ENCODE measurements at regions of chr1 and their contacts with region 1.

Region 1: GRCh38 chr1:151539990-151540981 is at the start of gene TUFT1:
- DNase-seq: peak; percentile 81 to 96
- H3K4me3 ChIP-seq: peak within 1 kb of the TSS; percentile 65 to 95 (median 82)
- H3K27ac ChIP-seq: peak within 1 kb of the TSS; percentile 78
- H3K4me1 ChIP-seq: peaks cover 0 to 7% (median 6%) of the 10 kb centered on the region in 4 experiments; a peak in 6 of 7 replicates
- H3K27me3 ChIP-seq: no peaks in the 10 kb centered on the region
- CTCF ChIP-seq: no peak
- EP300 ChIP-seq: no peak
- POLR2A ChIP-seq: peak; percentile 92 to 98
- RAD21 ChIP-seq: no peak
- total RNA-seq, gene TUFT1: 10.1 and 10.4 TPM in 2 replicates

Region 2: GRCh38 chr1:151472856-151473731 is 67.2 kb before region 1 on chr1:
- CTCF ChIA-PET with region 1: interaction called, 4 read pairs
- POLR2A ChIA-PET with region 1: interaction called, 13 read pairs
- DNase-seq: peak in 1 of 2 experiments; percentile 73
- H3K4me3 ChIP-seq: peak overlapping the region; percentile 42 to 66 (median 50)
- H3K27ac ChIP-seq: no peak overlapping the region; the same call in 1 of the 2 replicates
- H3K4me1 ChIP-seq: no peaks in the 10 kb centered on the region; a peak in 2 of 7 replicates
- H3K27me3 ChIP-seq: no peaks in the 10 kb centered on the region
- CTCF ChIP-seq: no peak
- EP300 ChIP-seq: no peak
- POLR2A ChIP-seq: peak; percentile 40 to 49
- RAD21 ChIP-seq: no peak

Region 3: DNA sequence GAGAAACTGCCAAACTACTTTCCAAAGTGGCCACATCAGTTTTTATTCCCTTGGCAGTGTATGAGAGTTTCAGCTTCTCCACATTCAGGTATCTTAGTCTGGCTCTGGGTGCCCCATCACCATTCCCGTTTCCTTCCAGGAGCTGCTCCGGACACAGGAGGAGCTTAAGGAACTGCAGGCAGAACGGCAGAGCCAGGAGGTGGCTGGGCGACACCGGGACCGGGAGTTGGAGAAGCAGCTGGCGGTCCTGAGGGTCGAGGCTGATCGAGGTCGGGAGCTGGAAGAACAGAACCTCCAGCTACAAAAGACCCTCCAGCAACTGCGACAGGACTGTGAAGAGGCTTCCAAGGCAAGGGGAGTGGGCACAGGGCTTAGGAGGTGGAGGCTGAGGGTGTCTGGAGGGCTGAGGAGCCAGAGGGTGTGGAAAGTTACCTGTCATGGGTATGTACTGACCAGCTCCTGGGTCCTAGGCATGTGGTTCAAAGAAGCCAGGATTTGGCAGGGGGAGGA is 11.0 kb before region 1 on chr1:
- CTCF ChIA-PET with region 1: interaction called, 5 read pairs
- POLR2A ChIA-PET with region 1: interaction called, 283 read pairs
- DNase-seq: no peak
- H3K4me3 ChIP-seq: no peak overlapping the region
- H3K27ac ChIP-seq: no peak overlapping the region
- H3K4me1 ChIP-seq: no peaks in the 10 kb centered on the region
- H3K27me3 ChIP-seq: no peaks in the 10 kb centered on the region
- CTCF ChIP-seq: no peak
- EP300 ChIP-seq: no peak
- POLR2A ChIP-seq: no peak
- RAD21 ChIP-seq: no peak

Region 4: DNA sequence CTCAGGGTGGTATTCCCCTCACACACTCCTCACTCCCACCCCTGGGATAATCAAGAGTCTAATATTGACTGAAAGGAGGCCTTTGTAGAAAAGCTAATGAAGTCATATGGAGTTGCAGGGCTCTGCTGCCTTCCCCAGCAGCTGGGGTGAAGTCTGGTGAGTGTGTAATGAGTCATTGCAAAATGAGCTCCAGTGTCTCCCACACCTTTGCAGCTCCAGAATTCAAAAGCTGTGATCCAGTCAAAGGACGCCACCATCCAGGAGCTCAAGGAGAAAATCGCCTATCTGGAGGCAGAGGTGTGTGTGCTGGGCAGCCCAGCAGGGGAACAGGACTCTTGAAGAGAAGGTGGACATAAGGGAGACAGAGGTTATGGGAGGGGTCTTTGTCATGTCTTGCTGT is 39.1 kb after region 1 on chr1:
- CTCF ChIA-PET with region 1: no interaction called
- POLR2A ChIA-PET with region 1: interaction called, 21 read pairs
- DNase-seq: no peak
- H3K4me3 ChIP-seq: no peak overlapping the region
- H3K27ac ChIP-seq: no peak overlapping the region
- H3K4me1 ChIP-seq: peaks cover 0 to 5% (median under 1%) of the 10 kb centered on the region in 4 experiments; a peak in 2 of 7 replicates
- H3K27me3 ChIP-seq: no peaks in the 10 kb centered on the region
- CTCF ChIP-seq: no peak
- EP300 ChIP-seq: no peak
- POLR2A ChIP-seq: no peak
- RAD21 ChIP-seq: no peak

Region 5: DNA sequence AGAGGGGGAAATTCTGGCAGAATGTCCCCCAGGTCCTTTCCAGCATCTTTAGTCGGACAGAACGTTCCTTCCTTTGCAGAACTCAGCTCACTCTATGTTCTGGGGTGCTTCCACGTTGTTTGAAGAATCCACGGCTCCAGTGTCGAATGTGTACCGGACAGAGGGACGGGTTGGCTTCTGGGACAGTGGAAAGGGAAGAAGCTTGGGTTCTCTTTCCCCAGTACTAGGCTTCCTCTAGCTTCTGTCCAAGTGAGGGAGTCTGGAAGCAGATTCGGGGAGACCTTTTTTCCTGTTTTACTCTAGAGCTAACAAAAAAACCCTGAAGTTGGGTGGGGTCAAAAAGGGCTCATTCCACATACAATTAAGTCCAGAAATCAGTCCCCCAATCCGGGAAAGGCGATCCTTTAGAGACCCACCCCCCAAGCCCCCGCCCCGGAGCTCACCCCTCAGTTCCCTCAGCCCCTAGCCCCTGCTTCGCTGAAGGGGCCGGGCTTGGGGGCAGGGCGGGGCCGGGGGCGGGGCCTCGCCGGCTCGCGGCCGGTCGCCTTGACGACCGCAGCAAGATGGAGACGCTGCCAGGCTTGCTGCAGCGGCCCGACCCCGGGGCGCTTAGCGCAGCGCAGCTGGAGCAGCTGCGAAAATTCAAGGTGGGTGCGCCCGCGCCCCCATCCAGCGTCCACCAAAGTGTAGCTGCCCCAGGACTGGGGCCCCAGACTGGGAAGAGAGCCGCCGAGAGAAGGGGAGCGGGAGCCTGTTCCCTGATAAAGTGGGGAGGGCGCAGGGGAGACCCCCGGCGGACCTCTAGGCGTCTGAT is 180.9 kb after region 1 on chr1 and contains the start of gene RIIAD1:
- CTCF ChIA-PET with region 1: no interaction called
- POLR2A ChIA-PET with region 1: interaction called, 15 read pairs
- DNase-seq: no peak
- H3K4me3 ChIP-seq: peak within 1 kb of the TSS; percentile 55 to 85 (median 60)
- H3K27ac ChIP-seq: no peak within 1 kb of the TSS
- H3K4me1 ChIP-seq: peaks cover 2 to 11% (median 4%) of the 10 kb centered on the region in 4 experiments
- H3K27me3 ChIP-seq: peaks cover 6 to 34% (median 28%) of the 10 kb centered on the region in 4 experiments
- CTCF ChIP-seq: no peak
- EP300 ChIP-seq: no peak
- POLR2A ChIP-seq: no peak
- RAD21 ChIP-seq: no peak
- total RNA-seq, gene RIIAD1: not detected in 2 replicates

Measured in H1 (cell line).